Activated T-helper 1 cell treated with anti-CD3 and anti-CD28 coated beads, Interleukin-12 subunit alpha, Interleukin-12 subunit beta, Interleukin-2, Interleukin-4 antibody, amounts not matched to agents 30 ng/mL and 10 ng/mL and 1 ng/mL, durations not matched to agents 14 hours and 24 hours and 36 hours (primary cell): ENCODE measurements at regions of chr11 and their contacts with region 1.

Region 1: GRCh38 chr11:62556108-62556871 is 9.7 kb upstream of the AHNAK start:
- DNase-seq: peak; percentile 87
- H3K4me3 Mint-ChIP-seq: peak overlapping the region; percentile 73
- H3K27ac Mint-ChIP-seq: peak overlapping the region; percentile 99
- H3K4me1 Mint-ChIP-seq: peaks cover 93% of the 10 kb centered on the region
- H3K27me3 Mint-ChIP-seq: no peaks in the 10 kb centered on the region

Region 2: GRCh38 chr11:61967116-61967923 is 589.0 kb before region 1 on chr11 and contains the start of gene FTH1:
- intact Hi-C with region 1: loop called (anchors 5 kb)
- DNase-seq: peak; percentile 86
- H3K4me3 Mint-ChIP-seq: peak within 1 kb of the TSS; percentile 89
- H3K27ac Mint-ChIP-seq: peak within 1 kb of the TSS; percentile 89
- H3K4me1 Mint-ChIP-seq: peaks cover 62% of the 10 kb centered on the region
- H3K27me3 Mint-ChIP-seq: no peaks in the 10 kb centered on the region
- total RNA-seq, gene FTH1: 566 and 580 TPM in 2 replicates

Region 3: DNA sequence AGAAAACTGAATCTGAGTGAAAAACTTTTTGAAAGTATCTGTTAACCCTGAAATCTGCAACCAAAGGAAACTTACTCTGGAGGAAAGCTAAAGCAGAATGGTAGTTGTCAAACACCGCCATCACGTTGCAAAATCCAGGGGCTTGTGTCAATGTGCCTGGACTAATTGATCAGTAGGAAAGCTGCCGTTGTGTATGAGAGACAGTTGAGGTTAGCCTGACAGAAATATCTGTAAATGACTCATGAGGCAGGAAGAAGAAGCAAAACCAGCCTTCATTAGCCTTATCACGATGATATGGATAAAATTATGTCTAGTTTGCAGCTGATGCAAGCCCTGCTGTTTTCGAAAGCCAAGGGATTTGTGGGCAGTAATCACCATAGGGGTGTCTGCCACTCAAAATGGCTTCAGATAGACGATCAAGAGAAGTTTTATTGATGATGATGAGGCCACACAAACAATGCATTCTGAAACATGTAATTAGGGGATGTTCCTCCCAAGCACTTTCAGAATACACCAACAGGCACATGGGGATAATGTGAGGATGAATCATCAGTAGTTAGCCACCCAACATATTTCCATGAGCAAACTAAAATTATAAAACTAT is 128.6 kb before region 1 on chr11:
- intact Hi-C with region 1: loop called (anchors 1 kb)
- DNase-seq: peak; percentile 7
- H3K4me3 Mint-ChIP-seq: peak overlapping the region; percentile 55
- H3K27ac Mint-ChIP-seq: peak overlapping the region; percentile 96
- H3K4me1 Mint-ChIP-seq: peaks cover 46% of the 10 kb centered on the region
- H3K27me3 Mint-ChIP-seq: no peaks in the 10 kb centered on the region

Region 4: DNA sequence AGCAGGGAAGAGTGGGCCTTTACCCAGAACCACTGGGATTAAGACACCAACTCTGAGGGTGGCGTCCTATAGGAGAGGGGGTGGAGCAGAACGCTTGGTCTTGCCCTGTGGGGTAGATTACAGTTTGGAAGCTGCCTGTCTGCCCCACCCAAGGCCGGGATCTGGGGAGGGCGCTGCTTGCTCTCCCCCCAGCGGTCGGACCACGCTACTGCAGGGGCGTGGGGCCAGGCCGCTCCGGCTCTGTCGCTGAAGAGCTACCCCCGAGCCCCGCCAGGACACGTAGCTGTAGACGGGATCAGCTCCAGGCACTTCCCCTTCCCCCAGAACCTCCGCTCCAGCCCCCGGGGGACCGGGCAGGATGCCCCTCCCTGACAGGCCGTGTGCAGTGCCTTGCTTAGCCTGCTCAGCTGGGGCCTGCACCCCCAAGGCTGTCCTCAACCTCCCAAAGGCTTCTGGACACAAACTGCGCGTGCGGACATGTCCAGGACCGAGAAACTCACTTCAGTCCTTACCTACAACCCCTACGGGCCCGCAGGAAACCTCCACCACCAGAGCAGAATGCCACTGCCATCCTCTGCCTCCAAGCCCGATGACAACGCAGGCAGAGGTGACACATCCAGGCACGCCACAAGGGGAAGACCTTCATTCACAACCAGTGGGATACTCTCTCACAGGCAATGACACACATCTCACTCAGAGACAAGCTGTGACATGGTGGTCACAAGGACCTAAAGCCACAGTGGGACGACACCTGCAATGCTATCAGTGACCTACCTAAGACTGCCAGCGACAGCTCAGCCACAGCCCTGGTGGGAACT is 13.3 kb before region 1 on chr11:
- intact Hi-C with region 1: loop called (anchors 1 kb)
- DNase-seq: peak; percentile 69
- H3K4me3 Mint-ChIP-seq: peak overlapping the region; percentile 97
- H3K27ac Mint-ChIP-seq: peak overlapping the region; percentile 95
- H3K4me1 Mint-ChIP-seq: peaks cover 75% of the 10 kb centered on the region
- H3K27me3 Mint-ChIP-seq: peaks cover 3% of the 10 kb centered on the region

Region 5: DNA sequence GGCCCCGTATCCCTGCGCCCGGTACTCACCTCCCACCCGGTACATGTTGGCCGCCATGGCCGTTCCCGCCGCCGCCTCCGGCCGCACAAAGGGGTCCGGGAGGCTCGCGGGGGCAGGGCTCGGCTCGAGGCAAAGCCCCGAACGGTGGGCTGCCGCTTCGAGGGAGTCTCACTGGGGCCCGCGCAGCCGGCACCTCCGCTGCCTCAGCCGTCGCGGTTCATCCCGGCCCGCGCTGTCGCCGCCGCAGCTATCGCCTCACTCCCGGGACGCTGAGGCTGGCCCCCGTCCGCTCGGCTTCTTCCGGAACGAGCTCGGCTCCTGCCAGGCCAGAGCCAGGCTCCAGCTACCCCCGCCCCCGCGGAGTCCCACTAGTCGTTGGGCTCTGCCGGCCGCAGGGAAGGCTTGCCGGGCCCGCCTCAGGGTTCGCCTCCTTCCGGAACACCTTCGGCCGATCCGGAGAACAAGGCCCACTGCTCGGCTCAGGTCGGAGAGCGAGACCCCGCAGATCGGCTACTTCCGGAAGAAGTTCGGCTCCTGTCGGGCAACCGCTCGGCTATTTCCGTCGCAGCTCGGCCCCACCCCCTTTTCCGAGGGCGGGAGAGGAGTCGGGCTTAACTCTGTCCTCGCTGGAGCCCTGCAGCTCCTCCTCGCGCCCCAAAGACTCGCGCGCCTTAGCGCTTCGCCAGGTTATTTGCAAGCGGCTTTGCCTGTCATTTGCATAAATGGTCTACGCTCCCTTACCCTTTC is 45.3 kb after region 1 on chr11 and contains the start of gene MTA2:
- intact Hi-C with region 1: loop called (anchors 2 kb)
- DNase-seq: peak; percentile 100
- H3K4me3 Mint-ChIP-seq: peak within 1 kb of the TSS; percentile 95
- H3K27ac Mint-ChIP-seq: peak within 1 kb of the TSS; percentile 92
- H3K4me1 Mint-ChIP-seq: peaks cover 54% of the 10 kb centered on the region
- H3K27me3 Mint-ChIP-seq: no peaks in the 10 kb centered on the region
- total RNA-seq, gene MTA2: 224 and 230 TPM in 2 replicates

Region 6: DNA sequence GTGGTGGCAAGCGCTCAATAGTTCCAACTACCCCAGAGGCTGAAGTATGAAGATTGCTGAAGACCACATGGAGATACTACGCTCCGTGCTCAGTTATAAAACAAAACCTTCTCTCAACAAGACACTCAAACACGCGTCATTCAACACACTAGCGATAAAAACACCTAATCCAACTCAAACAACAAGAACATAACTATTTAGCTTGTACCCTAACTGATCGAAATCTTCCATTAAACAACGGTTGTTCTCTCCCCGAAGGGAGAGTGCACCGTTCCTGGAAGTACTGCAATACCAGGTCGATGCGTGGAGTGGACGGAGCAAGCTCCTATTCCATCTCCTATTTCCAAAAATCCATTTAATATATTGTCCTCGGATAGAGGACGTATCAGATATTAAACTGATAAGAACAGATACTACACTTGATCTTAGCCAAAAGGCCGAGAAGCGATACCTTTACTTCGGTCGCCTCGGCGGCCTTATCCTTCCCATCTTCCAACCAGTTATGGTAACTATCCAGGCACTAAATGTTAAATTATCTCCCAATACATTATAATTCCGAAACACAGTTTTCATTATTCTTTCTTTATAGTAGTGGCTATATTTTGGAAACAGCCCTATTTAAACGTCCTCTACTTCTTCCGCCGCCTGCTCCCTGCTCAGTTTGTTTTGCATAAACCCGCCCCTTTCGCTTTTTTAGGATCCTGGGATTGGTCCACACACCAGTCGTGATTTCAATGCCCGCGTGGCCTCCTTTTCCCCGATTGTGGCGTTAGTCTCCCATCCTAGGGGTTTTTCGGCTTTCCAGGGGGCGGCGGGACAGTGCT is 285.3 kb after region 1 on chr11:
- intact Hi-C with region 1: loop called (anchors 1 kb)
- DNase-seq: peak; percentile 83
- H3K4me3 Mint-ChIP-seq: no peak overlapping the region
- H3K27ac Mint-ChIP-seq: no peak overlapping the region
- H3K4me1 Mint-ChIP-seq: peaks cover 18% of the 10 kb centered on the region
- H3K27me3 Mint-ChIP-seq: no peaks in the 10 kb centered on the region

Region 7: GRCh38 chr11:62880803-62881578 is 324.7 kb after region 1 on chr11 and contains the start of gene SLC3A2:
- intact Hi-C with region 1: loop called (anchors 2 kb)
- DNase-seq: peak; percentile 83
- H3K4me3 Mint-ChIP-seq: peak within 1 kb of the TSS; percentile 99
- H3K27ac Mint-ChIP-seq: peak within 1 kb of the TSS; percentile 100
- H3K4me1 Mint-ChIP-seq: peaks cover 52% of the 10 kb centered on the region
- H3K27me3 Mint-ChIP-seq: peaks cover 2% of the 10 kb centered on the region
- total RNA-seq, gene SLC3A2: 397 and 399 TPM in 2 replicates